Heart left ventricle (tissue), 16 donors: ENCODE measurements at regions of chr10 and their contacts with region 1.

Region 1: DNA sequence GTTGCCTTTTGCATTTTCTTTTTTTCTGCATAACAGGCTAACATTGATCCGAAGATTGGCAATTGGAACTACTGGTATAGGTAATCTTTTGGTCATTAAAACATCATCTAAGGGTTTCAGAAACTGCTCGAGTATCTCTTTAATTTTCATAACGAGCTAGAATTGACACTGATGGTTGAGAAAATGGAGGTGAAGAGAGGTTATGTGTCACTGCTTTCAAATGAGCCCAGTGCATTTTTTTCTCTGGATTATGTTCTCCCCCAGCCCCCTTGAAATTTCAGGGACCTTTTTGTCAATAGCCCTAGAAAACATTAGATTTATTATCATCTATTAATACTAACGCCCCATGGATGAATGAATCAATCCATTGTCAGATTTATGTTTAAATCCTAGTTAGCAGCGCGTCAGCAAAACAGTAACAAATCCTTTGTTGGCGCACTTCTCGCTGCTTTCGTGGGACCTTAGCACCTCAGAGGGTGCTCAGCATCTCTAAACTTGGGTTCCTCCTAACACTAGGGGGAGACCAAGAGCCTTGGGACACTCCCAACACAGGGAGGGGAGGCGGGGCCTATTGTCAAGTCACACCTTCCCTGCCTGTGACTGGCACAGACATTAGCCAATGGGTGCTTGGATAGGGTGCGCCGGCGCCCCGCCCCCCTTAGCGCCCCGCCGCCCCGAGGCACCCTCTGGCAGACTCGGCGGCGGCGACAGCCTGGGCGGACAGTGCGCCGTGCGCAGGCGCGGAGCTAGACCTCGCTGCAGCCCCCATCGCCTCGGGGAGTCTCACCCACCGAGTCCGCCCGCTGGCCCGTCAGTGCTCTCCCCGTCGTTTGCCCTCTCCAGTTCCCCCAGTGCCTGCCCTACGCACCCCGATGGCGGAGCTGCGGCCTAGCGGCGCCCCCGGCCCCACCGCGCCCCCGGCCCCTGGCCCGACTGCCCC is at the start of gene SUFU:
- DNase-seq: peak; percentile 98 to 99 (median 98)
- ATAC-seq: peak; percentile 77 to 90 (median 82)
- H3K4me3 ChIP-seq: peak within 1 kb of the TSS; percentile 70 to 97 (median 84)
- H3K27ac ChIP-seq: peak within 1 kb of the TSS; percentile 51 to 98 (median 88)
- H3K4me1 ChIP-seq: peaks cover 0 to 70% (median 43%) of the 10 kb centered on the region in 12 donors
- H3K27me3 ChIP-seq: no peaks in the 10 kb centered on the region
- CTCF ChIP-seq: peak; percentile 85 to 98 (median 95)
- POLR2A ChIP-seq: peak in 1 of 2 donors; percentile 85
- total RNA-seq, gene SUFU: 5.8 to 12.7 (median 7.7) TPM

Region 2: GRCh38 chr10:102394079-102394800 is 109.3 kb before region 1 on chr10:
- intact Hi-C with region 1: loop called in 1 of 10 experiments (anchors 1 kb)
- DNase-seq: peak; percentile 96 to 98 (median 97)
- ATAC-seq: peak; percentile 84 to 94 (median 92)
- H3K4me3 ChIP-seq: peak overlapping the region; percentile 50 to 91 (median 75)
- H3K27ac ChIP-seq: peak overlapping the region; percentile 89 to 99 (median 96)
- H3K4me1 ChIP-seq: peaks cover 3 to 42% (median 26%) of the 10 kb centered on the region in 12 donors
- H3K27me3 ChIP-seq: no peaks in the 10 kb centered on the region
- CTCF ChIP-seq: peak in 10 of 12 donors; percentile 1 to 98 (median 94)
- POLR2A ChIP-seq: peak in 1 of 2 donors; percentile 81

Region 3: GRCh38 chr10:102420810-102421644 is 82.5 kb before region 1 on chr10 and contains the start of gene FBXL15:
- intact Hi-C with region 1: no loop called
- DNase-seq: peak; percentile 96 to 99 (median 97)
- ATAC-seq: peak; percentile 87 to 94 (median 90)
- H3K4me3 ChIP-seq: peak within 1 kb of the TSS; percentile 52 to 99 (median 88)
- H3K27ac ChIP-seq: peak within 1 kb of the TSS; percentile 61 to 96 (median 90)
- H3K4me1 ChIP-seq: peaks cover 6 to 45% (median 28%) of the 10 kb centered on the region in 12 donors
- H3K27me3 ChIP-seq: peaks cover 0 to 27% (median 8%) of the 10 kb centered on the region in 9 donors
- CTCF ChIP-seq: peak in 1 of 12 donors; percentile 5
- POLR2A ChIP-seq: peak in 1 of 2 donors; percentile 41
- total RNA-seq, gene FBXL15: 6.6 to 13.9 (median 10.2) TPM

Region 4: GRCh38 chr10:102432162-102432950 is 71.2 kb before region 1 on chr10 and contains the start of gene CUEDC2:
- intact Hi-C with region 1: loop called in 1 of 10 experiments (anchors 2 kb)
- DNase-seq: peak; percentile 96 to 98 (median 97)
- ATAC-seq: peak; percentile 96 to 98 (median 96)
- H3K4me3 ChIP-seq: peak within 1 kb of the TSS; percentile 67 to 99 (median 91)
- H3K27ac ChIP-seq: peak within 1 kb of the TSS; percentile 43 to 91 (median 88)
- H3K4me1 ChIP-seq: peaks cover 0 to 55% (median 12%) of the 10 kb centered on the region in 12 donors
- H3K27me3 ChIP-seq: peaks cover 0 to 12% (median 0%) of the 10 kb centered on the region in 9 donors
- CTCF ChIP-seq: no peak
- POLR2A ChIP-seq: peak in 1 of 2 donors; percentile 66
- total RNA-seq, gene CUEDC2: 62.0 to 107 (median 79.2) TPM

Region 5: DNA sequence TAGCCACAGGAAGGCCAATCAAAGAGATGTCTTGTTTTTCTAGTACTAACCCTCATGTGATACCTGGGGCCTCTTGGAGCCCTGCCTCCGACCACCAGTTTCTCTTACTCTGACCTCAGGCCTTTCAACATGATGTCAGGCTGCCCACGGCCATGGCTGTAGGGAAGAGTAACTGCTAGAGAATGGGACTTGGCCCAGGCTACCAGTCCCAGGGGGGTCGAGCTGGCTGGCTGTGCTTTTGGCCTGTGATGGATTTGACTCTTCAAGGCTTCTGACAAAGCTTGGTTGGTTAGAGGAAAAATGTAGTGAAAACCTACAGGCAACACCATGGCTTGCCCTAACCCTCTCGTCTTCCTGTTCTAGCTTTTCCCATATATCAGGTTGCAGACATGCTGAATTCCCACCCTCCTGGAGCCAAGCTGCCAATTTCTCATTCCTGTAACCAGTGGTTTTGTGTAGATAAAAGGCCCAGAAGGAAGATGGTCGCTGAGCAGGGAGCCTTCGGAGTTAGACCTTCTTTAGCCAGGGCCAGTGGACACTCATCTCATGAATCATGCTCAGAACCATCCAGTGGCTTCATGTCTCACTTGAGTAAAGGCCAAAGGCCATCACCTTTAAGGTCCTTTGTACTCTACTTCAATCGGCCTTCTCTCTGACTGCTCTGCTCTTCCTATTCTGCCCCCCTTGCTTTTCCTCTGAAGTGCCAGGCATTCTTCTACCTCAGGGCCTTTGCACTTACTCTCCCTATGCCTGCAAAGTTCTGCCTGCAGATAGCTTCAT is 19.9 kb after region 1 on chr10:
- intact Hi-C with region 1: no loop called
- DNase-seq: peak in 3 of 5 donors; percentile 38 to 45 (median 40)
- ATAC-seq: peak in 3 of 4 donors; percentile 26 to 49 (median 41)
- H3K4me3 ChIP-seq: no peak overlapping the region
- H3K27ac ChIP-seq: peak overlapping the region in 2 of 12 donors; percentile 9 to 18
- H3K4me1 ChIP-seq: peaks cover 0 to 20% (median 0%) of the 10 kb centered on the region in 12 donors
- H3K27me3 ChIP-seq: no peaks in the 10 kb centered on the region
- CTCF ChIP-seq: no peak
- POLR2A ChIP-seq: no peak

Region 6: DNA sequence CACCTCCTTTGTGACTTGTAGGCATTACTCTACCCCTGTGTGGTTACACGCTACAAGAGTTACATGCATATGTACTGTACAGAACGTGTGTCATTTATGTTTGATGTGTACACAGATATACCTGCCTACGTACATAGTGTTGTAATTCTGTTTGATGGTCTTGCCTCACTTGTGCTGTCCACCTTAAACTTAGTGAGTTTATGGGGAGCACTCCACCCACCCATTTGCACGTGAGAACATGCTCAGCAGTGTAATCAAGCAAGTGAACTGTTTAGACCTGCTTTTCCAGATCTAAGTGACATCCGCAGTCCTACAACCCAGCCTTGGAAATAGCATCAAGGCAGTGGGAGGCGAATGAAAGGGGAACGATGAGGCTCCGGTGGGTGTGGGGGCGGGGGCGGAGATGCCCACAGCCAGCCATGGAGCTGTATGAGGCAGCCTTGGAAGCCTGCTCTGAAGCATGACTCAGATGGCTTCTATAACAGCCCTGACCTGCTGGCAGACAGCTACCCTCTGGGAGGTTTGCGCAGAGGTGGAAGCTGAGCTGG is 52.3 kb after region 1 on chr10:
- intact Hi-C with region 1: no loop called
- DNase-seq: peak in 1 of 5 donors; percentile 37
- ATAC-seq: peak in 3 of 4 donors; percentile 83 to 86 (median 84)
- H3K4me3 ChIP-seq: no peak overlapping the region
- H3K27ac ChIP-seq: no peak overlapping the region
- H3K4me1 ChIP-seq: peaks cover 0 to 11% (median 0%) of the 10 kb centered on the region in 12 donors
- H3K27me3 ChIP-seq: no peaks in the 10 kb centered on the region
- CTCF ChIP-seq: no peak
- POLR2A ChIP-seq: no peak

Region 7: GRCh38 chr10:102596506-102596971 is 93.0 kb after region 1 on chr10:
- intact Hi-C with region 1: loop called in 1 of 10 experiments (anchors 2 kb)
- DNase-seq: peak in 2 of 5 donors; percentile 48 to 54
- ATAC-seq: peak; percentile 48 to 72 (median 60)
- H3K4me3 ChIP-seq: peak overlapping the region in 1 of 12 donors; percentile 21
- H3K27ac ChIP-seq: peak overlapping the region; percentile 38 to 90 (median 76)
- H3K4me1 ChIP-seq: peaks cover 16 to 64% (median 54%) of the 10 kb centered on the region in 12 donors
- H3K27me3 ChIP-seq: no peaks in the 10 kb centered on the region
- CTCF ChIP-seq: peak; percentile 62 to 86 (median 78)
- POLR2A ChIP-seq: no peak